Heart right ventricle (tissue), 16 donors: ENCODE measurements at regions of chr3 and their contacts with region 1.

Region 1: DNA sequence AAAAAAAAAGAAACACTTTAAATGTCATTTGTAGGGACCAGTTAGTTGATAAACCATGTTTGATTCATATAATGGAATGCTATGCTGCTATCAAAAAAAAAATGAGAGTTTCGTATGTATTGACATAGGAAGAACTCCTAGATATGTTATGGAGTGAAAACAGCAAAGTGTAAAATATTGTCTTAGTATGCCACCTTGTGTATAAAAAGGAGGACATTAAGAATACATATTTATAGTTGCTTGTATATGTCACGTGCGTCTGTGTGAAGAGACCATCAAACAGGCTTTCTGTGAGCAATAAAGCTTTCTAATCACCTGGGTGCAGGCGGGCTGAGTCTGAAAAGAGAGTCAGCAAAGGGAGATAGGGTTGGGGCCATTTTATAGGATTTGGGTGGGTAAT is 39.5 kb downstream of the KBTBD8 start:
- DNase-seq: no peak
- ATAC-seq: peak in 1 of 8 donors; percentile 53
- H3K4me3 ChIP-seq: no peak overlapping the region
- H3K27ac ChIP-seq: no peak overlapping the region
- H3K4me1 ChIP-seq: no peaks in the 10 kb centered on the region
- H3K27me3 ChIP-seq: peaks cover 0 to 4% (median 0%) of the 10 kb centered on the region in 7 donors
- CTCF ChIP-seq: peak in 7 of 9 donors; percentile 8 to 52 (median 38)

Region 2: DNA sequence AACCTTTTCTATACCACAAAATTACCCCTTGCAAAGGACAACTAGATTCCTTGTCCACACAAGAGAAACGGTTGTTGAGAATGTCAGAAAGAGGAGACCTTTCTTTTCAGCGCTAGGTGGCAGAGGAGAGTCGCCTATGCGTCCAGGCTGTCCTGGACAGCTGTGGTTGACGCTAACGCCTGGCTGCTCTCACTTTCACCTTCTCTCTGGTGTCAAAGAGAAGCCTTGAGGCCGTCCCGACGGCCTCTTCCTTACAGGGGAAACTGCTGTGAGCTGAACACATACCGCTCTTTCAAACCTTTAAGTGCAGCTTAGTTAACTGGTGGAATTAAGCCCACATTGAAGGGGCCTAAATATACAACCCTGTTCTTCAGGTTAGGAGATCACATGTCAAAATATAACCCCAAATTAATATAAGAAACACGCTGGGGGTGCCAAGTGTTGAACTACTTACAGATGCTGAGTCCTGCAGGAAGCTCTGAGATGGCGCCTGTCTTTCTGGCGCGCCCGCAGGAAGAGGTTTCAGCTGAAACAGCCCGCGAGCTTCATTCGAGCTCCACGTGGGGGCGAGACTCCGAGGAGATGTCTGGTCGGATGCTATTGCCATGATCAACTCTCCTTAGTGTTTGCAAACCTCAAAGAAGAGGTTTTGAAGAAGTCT is 65.6 kb before region 1 on chr3:
- intact Hi-C with region 1: loop called (anchors 1 to 10 kb)
- DNase-seq: peak; percentile 58 to 76
- ATAC-seq: peak; percentile 92 to 99 (median 96)
- H3K4me3 ChIP-seq: peak overlapping the region in 9 of 10 donors; percentile 12 to 52 (median 42)
- H3K27ac ChIP-seq: peak overlapping the region in 4 of 10 donors; percentile 2 to 55 (median 28)
- H3K4me1 ChIP-seq: peaks cover 0 to 13% (median 6%) of the 10 kb centered on the region in 9 donors
- H3K27me3 ChIP-seq: peaks cover 0 to 14% (median 7%) of the 10 kb centered on the region in 7 donors
- CTCF ChIP-seq: peak; percentile 66 to 91 (median 86)

Region 3: GRCh38 chr3:66989860-66990665 is 47.6 kb before region 1 on chr3:
- intact Hi-C with region 1: loop called in 4 of 10 experiments (anchors 1 to 5 kb)
- DNase-seq: no peak
- ATAC-seq: peak in 2 of 8 donors; percentile 44 to 48
- H3K4me3 ChIP-seq: peak overlapping the region in 1 of 10 donors; percentile 22
- H3K27ac ChIP-seq: no peak overlapping the region
- H3K4me1 ChIP-seq: no peaks in the 10 kb centered on the region
- H3K27me3 ChIP-seq: peaks cover 0 to 25% (median 0%) of the 10 kb centered on the region in 7 donors
- CTCF ChIP-seq: peak in 8 of 9 donors; percentile 18 to 55 (median 38)

Region 4: DNA sequence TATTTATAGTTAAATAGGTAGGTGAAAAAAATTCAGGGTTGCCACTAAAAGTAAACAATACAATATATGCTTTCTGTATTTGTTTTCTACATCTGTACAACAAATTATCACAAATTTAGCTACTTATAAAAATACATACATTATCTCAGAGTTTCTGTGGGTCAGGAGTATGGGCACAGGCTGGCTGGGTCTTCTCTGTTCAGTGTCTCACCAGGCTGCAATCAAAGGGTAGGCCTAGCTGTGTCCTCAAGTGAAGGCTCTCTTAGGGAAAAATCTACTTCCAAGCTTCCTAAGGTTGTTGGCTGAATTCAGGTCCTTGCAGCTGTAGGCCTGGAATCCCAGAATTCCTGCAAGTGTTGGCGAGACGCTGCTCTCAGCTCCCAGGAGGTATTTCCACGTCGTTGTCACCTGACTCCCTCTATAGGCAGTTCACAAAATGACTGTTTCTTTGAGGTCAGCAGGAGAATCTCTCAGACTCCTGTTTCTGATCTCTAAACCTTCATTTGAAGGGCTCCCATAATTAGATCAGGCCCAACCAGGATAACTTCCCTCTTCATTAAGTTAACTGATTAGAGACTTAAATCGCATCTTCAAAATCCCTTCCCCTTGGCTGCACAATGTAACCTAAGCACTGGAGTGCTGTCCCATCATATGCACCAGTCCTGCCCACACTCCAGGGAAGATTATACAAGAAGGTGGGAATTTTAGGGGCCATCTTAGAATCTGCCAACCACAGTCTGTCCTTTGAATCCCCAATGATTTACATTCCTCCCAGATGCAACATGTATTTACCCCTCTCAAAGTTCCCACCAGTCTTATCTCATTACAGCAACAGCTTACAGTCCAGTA is 320.2 kb after region 1 on chr3:
- intact Hi-C with region 1: no loop called
- DNase-seq: no peak
- ATAC-seq: no peak
- H3K4me3 ChIP-seq: no peak overlapping the region
- H3K27ac ChIP-seq: no peak overlapping the region
- H3K4me1 ChIP-seq: no peaks in the 10 kb centered on the region
- H3K27me3 ChIP-seq: no peaks in the 10 kb centered on the region
- CTCF ChIP-seq: peak in 4 of 9 donors; percentile 8 to 35 (median 24)